ENCODE measurements at regions of chr2 and their contacts with region 1.

Region 1: DNA sequence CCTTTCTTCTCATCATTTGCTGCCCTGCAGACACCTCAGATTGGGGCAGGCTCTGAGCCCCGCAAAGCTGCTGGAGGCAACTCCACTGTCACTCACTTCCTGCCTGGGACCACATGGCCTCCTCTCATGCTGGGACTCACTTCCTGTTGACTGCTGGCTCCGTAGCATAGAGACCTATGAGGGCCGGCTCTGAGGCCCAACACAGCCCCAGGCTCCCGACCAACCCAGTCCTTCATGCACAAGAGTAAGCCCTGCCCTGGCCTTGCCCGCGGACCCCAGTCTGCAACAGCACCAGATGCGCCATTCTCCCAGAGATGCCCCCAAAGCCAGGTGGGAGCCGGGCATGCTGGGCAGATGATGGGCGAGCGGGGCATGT is 55.7 kb downstream of the DNMT3A start:
- DNase-seq: peak; percentile 46 to 84 (median 69)
- H3K4me3 ChIP-seq: peak overlapping the region; percentile 34
- H3K4me3 Mint-ChIP-seq: peak overlapping the region; percentile 35 to 87 (median 76)
- H3K27ac ChIP-seq: peak overlapping the region; percentile 54
- H3K27ac Mint-ChIP-seq: peak overlapping the region; percentile 95 to 99 (median 96)
- H3K4me1 ChIP-seq: peaks cover 51% of the 10 kb centered on the region
- H3K4me1 Mint-ChIP-seq: peaks cover 30 to 53% (median 36%) of the 10 kb centered on the region in 3 donors
- H3K27me3 ChIP-seq: no peaks in the 10 kb centered on the region
- H3K27me3 Mint-ChIP-seq: no peaks in the 10 kb centered on the region

Region 2: GRCh38 chr2:25215948-25216679 is 69.9 kb before region 1 on chr2:
- CTCF ChIA-PET with region 1: no interaction called
- POLR2A ChIA-PET with region 1: interaction called, 11 read pairs
- DNase-seq: peak; percentile 78 to 92 (median 87)
- H3K4me3 ChIP-seq: peak overlapping the region; percentile 58
- H3K4me3 Mint-ChIP-seq: peak overlapping the region; percentile 75 to 85 (median 80)
- H3K27ac ChIP-seq: no peak overlapping the region
- H3K27ac Mint-ChIP-seq: peak overlapping the region; percentile 69 to 96 (median 92)
- H3K4me1 ChIP-seq: no peaks in the 10 kb centered on the region
- H3K4me1 Mint-ChIP-seq: peaks cover 6 to 11% (median 7%) of the 10 kb centered on the region in 3 donors
- H3K27me3 ChIP-seq: no peaks in the 10 kb centered on the region
- H3K27me3 Mint-ChIP-seq: peaks cover 0 to 3% of the 10 kb centered on the region in 2 donors

Region 3: GRCh38 chr2:25309402-25309801 is 23.4 kb after region 1 on chr2:
- CTCF ChIA-PET with region 1: interaction called, 11 read pairs
- POLR2A ChIA-PET with region 1: interaction called, 4 read pairs
- DNase-seq: peak; percentile 40 to 75 (median 45)
- H3K4me3 ChIP-seq: no peak overlapping the region
- H3K4me3 Mint-ChIP-seq: peak overlapping the region in 2 of 7 donors; percentile 59 to 61
- H3K27ac ChIP-seq: no peak overlapping the region
- H3K27ac Mint-ChIP-seq: peak overlapping the region; percentile 11 to 99 (median 74)
- H3K4me1 ChIP-seq: peaks cover 78% of the 10 kb centered on the region
- H3K4me1 Mint-ChIP-seq: peaks cover 72 to 94% (median 75%) of the 10 kb centered on the region in 3 donors
- H3K27me3 ChIP-seq: no peaks in the 10 kb centered on the region
- H3K27me3 Mint-ChIP-seq: no peaks in the 10 kb centered on the region

Region 4: GRCh38 chr2:25368660-25369059 is 82.6 kb after region 1 on chr2:
- CTCF ChIA-PET with region 1: no interaction called
- POLR2A ChIA-PET with region 1: no interaction called
- DNase-seq: no peak
- H3K4me3 ChIP-seq: no peak overlapping the region
- H3K4me3 Mint-ChIP-seq: no peak overlapping the region
- H3K27ac ChIP-seq: no peak overlapping the region
- H3K27ac Mint-ChIP-seq: peak overlapping the region in 1 of 8 donors; percentile 74
- H3K4me1 ChIP-seq: peaks cover 2% of the 10 kb centered on the region
- H3K4me1 Mint-ChIP-seq: peaks cover 11 to 13% (median 12%) of the 10 kb centered on the region in 3 donors
- H3K27me3 ChIP-seq: no peaks in the 10 kb centered on the region
- H3K27me3 Mint-ChIP-seq: no peaks in the 10 kb centered on the region